Caco-2 (cell line): ENCODE measurements at regions of chrX and their contacts with region 1.

Region 1: DNA sequence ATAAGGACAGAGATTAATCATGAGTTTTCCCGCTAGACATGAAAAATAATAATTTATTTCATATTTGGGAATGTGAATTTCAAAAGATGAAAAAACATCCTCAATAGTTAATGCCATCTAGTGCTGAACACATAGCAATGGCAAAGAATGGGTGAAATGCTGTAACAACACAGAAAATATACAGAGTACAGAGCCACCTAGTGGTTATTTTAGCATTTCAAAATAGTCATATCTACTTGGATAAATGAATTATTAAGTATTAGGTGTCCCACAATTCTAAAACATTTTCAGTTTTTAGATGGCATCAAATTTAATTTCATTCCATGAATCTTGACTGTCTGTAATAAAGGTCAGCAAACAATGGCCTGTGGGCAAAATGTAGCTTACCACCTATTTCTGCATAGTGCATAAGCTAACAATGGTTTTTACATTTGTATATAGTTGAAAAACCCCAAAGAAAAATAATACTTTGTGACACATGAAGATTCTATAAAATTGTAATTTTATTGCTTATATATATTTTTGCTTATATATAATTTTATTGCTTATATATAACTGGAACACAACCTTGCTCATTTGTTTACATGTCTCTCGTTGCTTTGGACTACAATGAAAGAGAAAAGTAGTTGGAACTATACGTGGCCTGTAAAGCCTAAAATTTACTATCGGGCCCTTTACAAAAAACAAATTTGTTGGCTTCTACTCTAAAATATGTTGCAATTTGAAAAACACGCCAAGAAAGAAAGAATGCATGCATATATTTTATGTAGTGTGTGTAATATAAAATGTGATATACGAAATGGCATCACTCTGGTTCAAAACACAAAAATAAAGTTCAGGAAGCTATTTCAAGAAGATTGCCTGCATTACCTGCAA is 99.1 kb upstream of the FAM47C start:
- DNase-seq: peak in 1 of 2 experiments; percentile 4
- H3K4me3 ChIP-seq: no peak overlapping the region
- H3K4me3 Mint-ChIP-seq: no peak overlapping the region
- H3K27ac Mint-ChIP-seq: no peak overlapping the region
- H3K4me1 ChIP-seq: no peaks in the 10 kb centered on the region
- H3K4me1 Mint-ChIP-seq: no peaks in the 10 kb centered on the region
- H3K27me3 ChIP-seq: no peaks in the 10 kb centered on the region
- H3K27me3 Mint-ChIP-seq: no peaks in the 10 kb centered on the region
- CTCF ChIP-seq: peak; percentile 38 to 39

Region 2: GRCh38 chrX:37060999-37061398 is 152.0 kb after region 1 on chrX:
- CTCF ChIA-PET with region 1: no interaction called
- POLR2A ChIA-PET with region 1: no interaction called
- intact Hi-C with region 1: loop called (anchors 5 kb)
- DNase-seq: peak in 1 of 2 experiments; percentile 44
- H3K4me3 ChIP-seq: no peak overlapping the region
- H3K4me3 Mint-ChIP-seq: no peak overlapping the region
- H3K27ac Mint-ChIP-seq: no peak overlapping the region
- H3K4me1 ChIP-seq: no peaks in the 10 kb centered on the region
- H3K4me1 Mint-ChIP-seq: no peaks in the 10 kb centered on the region
- H3K27me3 ChIP-seq: no peaks in the 10 kb centered on the region
- H3K27me3 Mint-ChIP-seq: no peaks in the 10 kb centered on the region
- CTCF ChIP-seq: peak; percentile 35 to 49